AG04450 (cell line): ENCODE measurements at regions of chr15 and their contacts with region 1.

Region 1: DNA sequence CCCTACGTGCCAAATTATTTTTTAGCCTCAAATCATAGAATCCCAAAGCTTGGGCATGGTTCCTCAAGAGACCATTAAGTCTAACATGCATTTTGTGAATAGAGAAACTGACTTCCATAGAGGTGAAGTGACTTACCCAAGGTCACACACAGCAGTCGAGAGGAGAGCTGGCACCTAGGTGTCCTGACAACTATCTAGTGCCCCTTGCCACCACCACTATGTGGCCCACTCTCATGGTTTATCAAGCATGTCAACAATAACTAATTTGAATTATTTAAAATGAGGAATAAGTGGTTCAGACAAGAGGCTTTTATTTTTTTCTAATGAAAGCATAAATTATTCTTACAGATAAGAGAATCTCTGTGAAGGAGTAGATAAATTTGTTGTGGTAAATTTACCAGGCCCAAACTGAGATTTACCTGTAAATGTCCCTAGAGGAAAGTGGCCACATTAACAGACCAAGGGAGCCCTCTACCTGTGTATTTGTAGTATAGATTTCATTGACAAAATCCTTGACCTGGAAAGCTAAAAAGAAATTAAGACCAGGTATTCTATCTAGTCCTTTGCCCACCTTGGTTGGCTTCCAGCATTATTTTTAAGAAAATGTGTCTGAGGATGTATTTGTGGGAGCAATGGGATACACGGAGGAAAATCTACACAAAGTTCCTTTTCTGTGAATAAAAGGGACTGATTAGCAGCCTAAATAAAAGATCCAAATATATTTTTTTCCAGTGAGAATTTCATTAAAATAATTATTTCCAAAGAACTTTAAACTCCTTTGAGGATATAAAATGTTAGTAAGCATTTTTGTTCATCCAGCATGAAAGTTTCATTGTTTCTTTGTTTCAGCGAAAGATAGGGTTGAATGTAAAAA is 49.1 kb downstream of the IQCH start:
- DNase-seq: no peak
- H3K4me3 ChIP-seq: no peak overlapping the region
- H3K27ac ChIP-seq: no peak overlapping the region
- H3K27me3 ChIP-seq: no peaks in the 10 kb centered on the region
- CTCF ChIP-seq: peak; percentile 40

Region 2: GRCh38 chr15:66700802-66701421 is 602.8 kb before region 1 on chr15:
- CTCF ChIA-PET with region 1: no interaction called
- POLR2A ChIA-PET with region 1: no interaction called
- DNase-seq: peak; percentile 84
- H3K4me3 ChIP-seq: peak overlapping the region; percentile 67
- H3K27ac ChIP-seq: no peak overlapping the region
- H3K27me3 ChIP-seq: no peaks in the 10 kb centered on the region
- CTCF ChIP-seq: no peak

Region 3: DNA sequence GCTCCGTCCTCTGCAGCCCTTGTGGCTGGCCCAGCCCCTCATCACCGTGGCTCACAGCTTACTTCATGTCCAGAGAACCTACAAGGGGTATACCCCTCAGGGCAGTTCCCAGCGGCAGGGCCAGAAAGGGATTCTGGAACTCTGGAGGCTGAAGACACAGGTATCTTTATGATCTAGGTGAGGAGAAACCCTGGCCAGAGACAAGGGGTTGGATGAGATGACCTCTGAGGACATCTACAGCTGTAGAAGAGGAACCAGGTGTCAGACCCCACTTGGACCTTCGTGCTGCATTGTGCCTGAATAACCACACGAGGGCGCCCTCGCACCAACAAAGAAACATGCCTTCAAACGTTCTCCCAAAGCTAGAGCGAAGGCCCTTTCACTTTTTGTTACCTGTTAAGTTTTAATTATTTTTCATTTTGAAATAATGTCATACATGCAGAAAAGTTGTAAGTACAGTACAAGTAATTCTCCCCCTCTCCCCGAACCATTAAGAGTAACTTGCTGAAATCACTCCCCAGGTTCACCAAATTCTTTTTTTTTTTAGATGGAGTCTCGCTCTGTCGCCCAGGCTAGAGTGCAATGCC is 357.1 kb before region 1 on chr15:
- CTCF ChIA-PET with region 1: interaction called, 12 read pairs
- POLR2A ChIA-PET with region 1: no interaction called
- DNase-seq: no peak
- H3K4me3 ChIP-seq: no peak overlapping the region
- H3K27ac ChIP-seq: no peak overlapping the region
- H3K27me3 ChIP-seq: no peaks in the 10 kb centered on the region
- CTCF ChIP-seq: peak; percentile 84

Region 4: GRCh38 chr15:68352401-68353062 is 1048.8 kb after region 1 on chr15:
- CTCF ChIA-PET with region 1: no interaction called
- POLR2A ChIA-PET with region 1: no interaction called
- DNase-seq: peak; percentile 82
- H3K4me3 ChIP-seq: no peak overlapping the region
- H3K27ac ChIP-seq: peak overlapping the region; percentile 95
- H3K27me3 ChIP-seq: no peaks in the 10 kb centered on the region
- CTCF ChIP-seq: no peak